ENCODE measurements at regions of chr10 and their contacts with region 1.

Region 1: GRCh38 chr10:97037365-97038361 is 148.1 kb downstream of the SLIT1 start:
- DNase-seq: peak; percentile 81
- H3K4me3 Mint-ChIP-seq: peak overlapping the region; percentile 38
- H3K27ac Mint-ChIP-seq: peak overlapping the region; percentile 7
- H3K4me1 Mint-ChIP-seq: peaks cover 28% of the 10 kb centered on the region
- H3K27me3 Mint-ChIP-seq: peaks cover 29% of the 10 kb centered on the region
- CTCF ChIP-seq: peak; percentile 77

Region 2: DNA sequence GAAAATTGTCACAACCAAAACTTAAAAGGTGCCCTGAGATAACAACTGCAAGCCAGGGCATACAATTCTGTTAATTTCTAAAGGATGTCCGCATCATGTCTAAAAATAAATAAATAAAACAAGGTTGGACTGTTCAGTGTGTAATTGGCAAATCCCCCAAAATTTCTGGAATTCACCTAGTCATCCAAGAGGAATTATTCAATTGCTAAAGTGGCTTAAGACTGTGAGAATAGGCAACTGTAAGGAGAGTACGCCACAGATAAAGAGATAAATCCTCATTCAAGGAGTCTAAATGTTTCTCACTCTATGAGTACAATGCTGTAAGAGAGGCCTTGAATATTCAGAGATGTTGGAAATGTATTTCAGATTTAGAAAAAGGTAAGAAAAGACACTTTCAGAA is 354.6 kb before region 1 on chr10:
- CTCF ChIA-PET with region 1: no interaction called
- intact Hi-C with region 1: no loop called
- DNase-seq: no peak
- H3K4me3 Mint-ChIP-seq: no peak overlapping the region
- H3K27ac Mint-ChIP-seq: no peak overlapping the region
- H3K4me1 Mint-ChIP-seq: peaks cover 36% of the 10 kb centered on the region
- H3K27me3 Mint-ChIP-seq: no peaks in the 10 kb centered on the region
- CTCF ChIP-seq: no peak

Region 3: GRCh38 chr10:97072851-97073665 is 35.4 kb after region 1 on chr10:
- CTCF ChIA-PET with region 1: interaction called, 19 read pairs
- intact Hi-C with region 1: no loop called
- DNase-seq: peak; percentile 79
- H3K4me3 Mint-ChIP-seq: no peak overlapping the region
- H3K27ac Mint-ChIP-seq: no peak overlapping the region
- H3K4me1 Mint-ChIP-seq: peaks cover 7% of the 10 kb centered on the region
- H3K27me3 Mint-ChIP-seq: peaks cover 83% of the 10 kb centered on the region
- CTCF ChIP-seq: peak; percentile 55